Astrocyte of the cerebellum (primary cell): ENCODE measurements at regions of chr2 and their contacts with region 1.

Region 1: GRCh38 chr2:161586517-161587167 is 37.6 kb upstream of the SLC4A10 start:
- DNase-seq: peak; percentile 8
- H3K4me3 ChIP-seq: no peak overlapping the region
- CTCF ChIP-seq: peak; percentile 54

Region 2: GRCh38 chr2:161946489-161947107 is 360.0 kb after region 1 on chr2:
- in situ Hi-C with region 1: loop called (anchors 25 kb)
- DNase-seq: peak; percentile 37
- H3K4me3 ChIP-seq: no peak overlapping the region
- CTCF ChIP-seq: peak; percentile 40